ENCODE measurements at regions of chr6 and their contacts with region 1.

Region 1: DNA sequence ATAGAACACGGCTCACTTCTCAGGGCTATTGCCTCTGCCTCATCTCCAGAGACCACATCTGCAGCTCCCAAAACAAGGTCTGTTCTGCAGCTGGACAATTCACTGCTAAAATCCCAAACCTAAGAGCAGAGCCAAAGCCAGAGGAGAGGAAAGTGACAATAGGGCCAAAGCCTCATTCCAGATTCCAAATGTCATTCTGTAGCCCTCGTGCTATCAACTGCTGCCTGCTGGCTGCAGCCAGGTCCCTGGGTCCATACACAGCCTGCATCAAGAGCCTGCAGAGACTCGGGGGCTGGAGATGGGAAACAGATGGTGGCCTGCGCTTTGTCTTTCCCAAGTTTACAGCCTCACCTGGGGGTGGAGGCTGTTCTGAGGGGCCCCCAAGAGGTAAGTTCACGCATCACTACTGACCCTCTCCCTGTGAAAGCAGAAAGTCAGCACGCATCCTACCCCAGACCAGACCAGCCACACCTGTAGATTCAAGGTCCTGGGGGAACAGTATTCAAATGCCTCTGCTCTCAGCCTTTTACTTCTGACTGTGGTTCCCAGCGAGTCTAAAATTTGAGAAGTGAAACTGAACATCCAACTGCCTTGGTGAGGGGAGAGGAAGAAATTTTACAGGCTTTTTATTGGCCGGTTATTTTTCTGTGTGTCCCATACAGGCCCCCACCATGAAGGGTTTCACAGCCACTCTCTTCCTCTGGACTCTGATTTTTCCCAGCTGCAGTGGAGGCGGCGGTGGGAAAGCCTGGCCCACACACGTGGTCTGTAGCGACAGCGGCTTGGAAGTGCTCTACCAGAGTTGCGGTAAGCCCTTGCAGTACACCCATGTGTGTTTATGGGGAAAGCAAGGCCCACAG is at the start of gene LY86:
- DNase-seq: peak; percentile 64
- ATAC-seq: peak; percentile 62
- H3K4me3 Mint-ChIP-seq: peak within 1 kb of the TSS; percentile 88
- H3K27ac Mint-ChIP-seq: peak within 1 kb of the TSS; percentile 99
- H3K4me1 Mint-ChIP-seq: peaks cover 77% of the 10 kb centered on the region
- H3K27me3 Mint-ChIP-seq: no peaks in the 10 kb centered on the region
- total RNA-seq, gene LY86: 5.5 to 5.7 TPM

Region 2: GRCh38 chr6:6654599-6655575 is 66.6 kb after region 1 on chr6:
- POLR2A ChIA-PET with region 1: interaction called, 24 read pairs
- DNase-seq: peak; percentile 60
- ATAC-seq: peak; percentile 56
- H3K4me3 Mint-ChIP-seq: peak overlapping the region; percentile 50
- H3K27ac Mint-ChIP-seq: peak overlapping the region; percentile 98
- H3K4me1 Mint-ChIP-seq: peaks cover 91% of the 10 kb centered on the region
- H3K27me3 Mint-ChIP-seq: no peaks in the 10 kb centered on the region

Region 3: GRCh38 chr6:6696867-6697531 is 108.7 kb after region 1 on chr6:
- POLR2A ChIA-PET with region 1: no interaction called
- DNase-seq: peak; percentile 71
- ATAC-seq: peak; percentile 44
- H3K4me3 Mint-ChIP-seq: peak overlapping the region; percentile 25
- H3K27ac Mint-ChIP-seq: peak overlapping the region; percentile 73
- H3K4me1 Mint-ChIP-seq: peaks cover 29% of the 10 kb centered on the region
- H3K27me3 Mint-ChIP-seq: peaks cover 18% of the 10 kb centered on the region

Measured in activated naive CD8-positive, alpha-beta T cell treated with anti-CD3 and anti-CD28 coated beads, Interleukin-2, amount 10 ng/mL, durations not matched to agents 7 days and 5 days (primary cell).